Endothelial cell of umbilical vein (primary cell): ENCODE measurements at regions of chr3 and their contacts with region 1.

Region 1: GRCh38 chr3:146065573-146066006 is 95.4 kb downstream of the PLOD2 start:
- DNase-seq: peak; percentile 80
- H3K4me3 ChIP-seq: no peak overlapping the region
- H3K27ac ChIP-seq: no peak overlapping the region
- H3K4me1 ChIP-seq: peaks cover 4% of the 10 kb centered on the region
- H3K27me3 ChIP-seq: no peaks in the 10 kb centered on the region
- CTCF ChIP-seq: peak; percentile 27 to 30
- POLR2A ChIP-seq: no peak

Region 2: GRCh38 chr3:145623349-145623748 is 442.2 kb before region 1 on chr3:
- CTCF ChIA-PET with region 1: no interaction called
- POLR2A ChIA-PET with region 1: no interaction called
- dilution Hi-C with region 1: no loop called
- intact Hi-C with region 1: no loop called
- DNase-seq: peak; percentile 17
- H3K4me3 ChIP-seq: no peak overlapping the region
- H3K27ac ChIP-seq: no peak overlapping the region
- H3K4me1 ChIP-seq: no peaks in the 10 kb centered on the region
- H3K27me3 ChIP-seq: no peaks in the 10 kb centered on the region
- CTCF ChIP-seq: no peak
- POLR2A ChIP-seq: no peak

Region 3: DNA sequence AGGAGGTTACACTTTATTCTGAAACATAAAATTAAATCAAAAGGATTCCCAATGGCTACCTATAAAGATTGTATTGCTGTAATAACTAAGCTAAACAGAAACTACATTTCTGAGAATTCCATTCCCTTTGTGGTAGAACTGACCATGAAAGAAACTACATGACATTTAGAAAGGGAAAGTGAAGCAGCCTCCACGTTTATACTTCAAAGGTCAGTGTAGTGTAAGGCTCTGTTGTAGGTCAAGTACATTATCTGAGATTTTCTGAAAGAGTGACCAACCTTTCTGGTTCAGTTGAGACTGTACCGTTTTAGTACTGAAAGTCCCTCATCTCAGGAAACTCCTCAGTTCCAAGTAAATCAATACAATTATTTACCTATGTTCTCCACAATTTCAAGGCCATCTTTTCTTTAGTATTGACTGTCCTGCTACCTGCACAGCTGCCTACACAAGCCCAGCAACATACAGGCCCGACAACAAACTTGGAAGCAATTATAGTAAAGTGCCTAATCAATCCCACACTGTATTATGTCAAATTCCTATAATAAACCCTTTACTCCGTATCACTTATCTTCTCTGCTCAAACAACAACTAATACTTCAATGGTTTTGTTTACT is 247.6 kb before region 1 on chr3:
- CTCF ChIA-PET with region 1: no interaction called
- POLR2A ChIA-PET with region 1: no interaction called
- dilution Hi-C with region 1: no loop called
- intact Hi-C with region 1: no loop called
- DNase-seq: no peak
- H3K4me3 ChIP-seq: no peak overlapping the region
- H3K27ac ChIP-seq: no peak overlapping the region
- H3K4me1 ChIP-seq: no peaks in the 10 kb centered on the region
- H3K27me3 ChIP-seq: no peaks in the 10 kb centered on the region
- CTCF ChIP-seq: no peak
- POLR2A ChIP-seq: no peak

Region 4: DNA sequence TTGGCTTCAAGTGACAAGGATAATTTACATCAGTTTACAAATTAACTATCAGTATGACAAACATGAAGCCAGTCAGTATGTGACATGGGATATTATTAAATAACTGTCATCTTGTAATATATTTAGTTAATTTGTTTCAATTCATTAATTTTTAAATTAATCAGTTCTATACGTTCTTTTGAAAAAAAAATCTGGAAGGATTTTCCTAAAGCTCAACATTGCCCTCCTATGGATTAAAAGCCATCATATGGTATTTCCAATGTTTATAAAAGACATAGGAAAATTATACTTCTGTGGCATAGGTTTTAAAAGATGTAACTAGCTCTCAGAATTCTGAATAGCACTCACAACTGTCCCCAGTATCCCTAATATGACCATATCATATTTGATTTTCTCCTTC is 39.0 kb before region 1 on chr3:
- CTCF ChIA-PET with region 1: no interaction called
- POLR2A ChIA-PET with region 1: no interaction called
- dilution Hi-C with region 1: no loop called
- intact Hi-C with region 1: no loop called
- DNase-seq: no peak
- H3K4me3 ChIP-seq: no peak overlapping the region
- H3K27ac ChIP-seq: no peak overlapping the region
- H3K4me1 ChIP-seq: no peaks in the 10 kb centered on the region
- H3K27me3 ChIP-seq: no peaks in the 10 kb centered on the region
- CTCF ChIP-seq: no peak
- POLR2A ChIP-seq: no peak

Region 5: GRCh38 chr3:146052791-146053310 is 12.7 kb before region 1 on chr3:
- CTCF ChIA-PET with region 1: interaction called, 12 read pairs
- POLR2A ChIA-PET with region 1: no interaction called
- dilution Hi-C with region 1: no loop called
- intact Hi-C with region 1: no loop called
- DNase-seq: no peak
- H3K4me3 ChIP-seq: no peak overlapping the region
- H3K27ac ChIP-seq: no peak overlapping the region
- H3K4me1 ChIP-seq: no peaks in the 10 kb centered on the region
- H3K27me3 ChIP-seq: no peaks in the 10 kb centered on the region
- CTCF ChIP-seq: no peak
- POLR2A ChIP-seq: no peak

Region 6: GRCh38 chr3:146117406-146118285 is 52.1 kb after region 1 on chr3:
- CTCF ChIA-PET with region 1: no interaction called
- POLR2A ChIA-PET with region 1: no interaction called
- dilution Hi-C with region 1: no loop called
- intact Hi-C with region 1: no loop called
- DNase-seq: no peak
- H3K4me3 ChIP-seq: no peak overlapping the region
- H3K27ac ChIP-seq: no peak overlapping the region
- H3K4me1 ChIP-seq: no peaks in the 10 kb centered on the region
- H3K27me3 ChIP-seq: no peaks in the 10 kb centered on the region
- CTCF ChIP-seq: no peak
- POLR2A ChIP-seq: no peak

Region 7: DNA sequence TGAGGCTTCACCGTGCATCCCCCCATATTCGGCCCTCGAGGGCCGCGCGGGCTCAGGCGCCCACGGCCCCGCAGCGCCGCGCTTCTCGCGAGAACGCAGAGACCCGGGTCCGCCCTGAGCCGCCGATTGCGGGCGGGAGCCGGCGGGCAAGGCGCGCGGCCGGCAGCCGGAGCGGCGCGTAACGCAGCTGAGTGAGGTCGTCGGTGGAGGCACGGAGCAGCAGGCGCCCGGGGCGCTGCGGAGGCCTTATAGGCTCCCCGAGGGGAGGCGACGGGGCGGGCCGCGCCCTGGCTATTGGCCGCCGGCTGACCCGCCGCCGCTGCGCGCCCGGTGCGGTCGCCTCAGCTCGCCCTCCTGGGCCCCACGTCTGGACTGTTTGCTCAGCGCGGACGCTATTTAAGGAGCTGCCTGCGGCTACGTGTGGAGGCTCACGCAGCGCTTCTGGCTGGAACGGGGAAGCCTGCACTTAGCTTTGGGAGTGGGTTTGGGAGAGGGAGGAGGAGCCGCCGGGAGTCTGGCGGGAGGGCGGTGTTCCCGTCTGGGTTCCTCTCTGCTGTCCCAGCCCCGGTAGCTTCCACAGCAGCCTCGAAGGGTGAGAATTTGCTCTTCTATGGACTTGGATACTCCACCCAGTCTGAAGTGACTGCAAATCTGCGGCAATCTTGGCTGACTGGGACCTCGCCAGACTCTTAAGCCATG is 95.5 kb after region 1 on chr3 and contains the start of gene PLOD2:
- CTCF ChIA-PET with region 1: interaction called, 85 read pairs
- POLR2A ChIA-PET with region 1: interaction called, 8 read pairs
- dilution Hi-C with region 1: no loop called
- intact Hi-C with region 1: loop called (anchors 1 kb)
- DNase-seq: peak; percentile 90
- H3K4me3 ChIP-seq: peak within 1 kb of the TSS; percentile 55 to 94 (median 80)
- H3K27ac ChIP-seq: peak within 1 kb of the TSS; percentile 90
- H3K4me1 ChIP-seq: peaks cover 72% of the 10 kb centered on the region
- H3K27me3 ChIP-seq: no peaks in the 10 kb centered on the region
- CTCF ChIP-seq: no peak
- POLR2A ChIP-seq: peak; percentile 98
- total RNA-seq, gene PLOD2: 193 and 228 TPM in 2 replicates

Region 8: GRCh38 chr3:146184616-146185015 is 119.0 kb after region 1 on chr3:
- CTCF ChIA-PET with region 1: interaction called, 170 read pairs
- POLR2A ChIA-PET with region 1: no interaction called
- dilution Hi-C with region 1: no loop called
- intact Hi-C with region 1: loop called (anchors 1 kb)
- DNase-seq: no peak
- H3K4me3 ChIP-seq: no peak overlapping the region
- H3K27ac ChIP-seq: no peak overlapping the region
- H3K4me1 ChIP-seq: peaks cover 9% of the 10 kb centered on the region
- H3K27me3 ChIP-seq: no peaks in the 10 kb centered on the region
- CTCF ChIP-seq: no peak
- POLR2A ChIP-seq: no peak

Region 9: GRCh38 chr3:146218880-146219866 is 153.6 kb after region 1 on chr3:
- CTCF ChIA-PET with region 1: interaction called, 8 read pairs
- POLR2A ChIA-PET with region 1: no interaction called
- dilution Hi-C with region 1: no loop called
- intact Hi-C with region 1: loop called (anchors 1 kb)
- DNase-seq: peak; percentile 71
- H3K4me3 ChIP-seq: no peak overlapping the region
- H3K27ac ChIP-seq: peak overlapping the region; percentile 10
- H3K4me1 ChIP-seq: peaks cover 50% of the 10 kb centered on the region
- H3K27me3 ChIP-seq: no peaks in the 10 kb centered on the region
- CTCF ChIP-seq: peak; percentile 37 to 39
- POLR2A ChIP-seq: no peak